ENCODE measurements at regions of chr20 and their contacts with region 1.

Region 1: DNA sequence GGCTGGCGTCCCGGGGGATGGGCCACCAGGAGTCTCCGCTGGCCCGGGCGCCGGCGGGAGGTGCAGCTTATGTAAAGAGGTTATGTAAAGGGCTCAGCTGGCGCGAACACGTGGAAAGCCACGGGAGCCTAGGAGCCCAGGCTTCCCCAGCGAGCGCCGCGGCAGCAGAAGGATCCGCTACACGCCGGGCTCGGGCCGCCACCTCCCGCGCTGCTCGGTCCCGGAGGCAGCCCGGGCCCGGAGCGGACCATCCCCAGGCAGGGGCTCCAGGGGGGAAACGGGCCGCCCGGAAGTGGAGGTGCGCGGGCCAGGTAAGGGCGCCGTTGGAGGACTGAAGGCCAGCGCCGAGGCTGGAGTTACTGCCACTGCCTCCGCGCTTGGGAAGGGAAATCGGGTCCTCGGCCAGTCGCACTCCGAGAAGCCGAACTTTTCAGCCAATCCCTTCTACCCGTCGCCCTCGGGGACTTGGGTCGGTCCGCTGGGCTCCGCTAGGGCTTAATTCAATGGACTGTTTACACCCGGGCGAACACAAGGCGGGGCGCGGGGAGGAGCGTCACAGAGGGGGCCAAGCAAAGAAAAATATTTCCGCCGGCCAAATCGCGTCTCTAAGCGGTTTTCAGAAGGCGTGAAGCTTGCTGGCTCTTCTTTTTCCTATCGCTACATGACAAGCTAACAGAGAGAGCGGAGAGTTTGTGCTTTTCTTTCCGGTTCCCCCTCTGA is 398 bp downstream of the STK35 start:
- DNase-seq: peak; percentile 88
- H3K4me3 ChIP-seq: peak overlapping the region; percentile 83 to 99
- H3K27ac ChIP-seq: peak overlapping the region; percentile 99
- H3K4me1 ChIP-seq: peaks cover 19% of the 10 kb centered on the region
- H3K27me3 ChIP-seq: no peaks in the 10 kb centered on the region
- CTCF ChIP-seq: peak in 2 of 4 experiments; percentile 19 to 39
- POLR2A ChIP-seq: peak; percentile 44

Region 2: GRCh38 chr20:1876975-1877608 is 224.9 kb before region 1 on chr20:
- intact Hi-C with region 1: no loop called
- DNase-seq: no peak
- H3K4me3 ChIP-seq: no peak overlapping the region
- H3K27ac ChIP-seq: no peak overlapping the region
- H3K4me1 ChIP-seq: no peaks in the 10 kb centered on the region
- H3K27me3 ChIP-seq: no peaks in the 10 kb centered on the region
- CTCF ChIP-seq: no peak
- POLR2A ChIP-seq: no peak

Region 3: GRCh38 chr20:1894951-1895673 is 206.9 kb before region 1 on chr20 and contains the start of gene SIRPA:
- intact Hi-C with region 1: loop called (anchors 5 kb)
- DNase-seq: peak; percentile 58
- H3K4me3 ChIP-seq: peak within 1 kb of the TSS; percentile 59 to 63
- H3K27ac ChIP-seq: peak within 1 kb of the TSS; percentile 88 to 92
- H3K4me1 ChIP-seq: no peaks in the 10 kb centered on the region
- H3K27me3 ChIP-seq: no peaks in the 10 kb centered on the region
- CTCF ChIP-seq: no peak
- POLR2A ChIP-seq: peak; percentile 27
- total RNA-seq, gene SIRPA: 20.3 to 31.0 TPM

Region 4: DNA sequence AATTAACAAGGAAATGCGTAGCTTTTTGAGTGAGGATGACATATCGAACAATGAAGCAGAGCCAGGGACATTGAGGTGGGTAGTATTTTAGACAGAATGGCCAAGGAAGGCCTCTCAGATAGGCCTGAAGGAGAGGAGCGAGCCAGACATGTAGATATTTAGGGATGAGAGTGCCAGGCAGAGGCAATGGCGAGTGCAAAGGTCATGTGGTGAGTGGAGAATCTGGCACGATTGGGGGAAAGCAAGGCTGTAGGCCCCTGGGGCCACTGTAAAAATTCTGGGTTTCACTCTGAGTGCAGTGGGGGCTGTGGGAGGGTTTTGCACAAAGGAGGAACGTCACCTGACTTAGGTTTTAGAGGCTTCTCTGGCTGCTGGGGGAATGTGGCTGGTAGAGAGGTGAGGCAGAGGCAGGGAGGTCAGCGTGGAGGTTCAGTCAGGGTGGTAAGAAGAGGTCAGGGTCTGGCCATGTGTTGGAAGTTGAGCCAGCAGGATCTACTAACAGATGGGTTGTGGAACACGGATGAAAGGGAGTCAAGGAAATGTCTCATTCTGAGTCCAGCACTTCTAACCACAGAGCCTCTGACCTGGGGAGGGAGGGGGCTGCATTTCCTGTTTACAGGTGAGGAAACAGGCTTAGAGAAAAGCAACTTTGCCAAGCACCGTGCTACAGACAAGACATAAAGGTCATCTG is 195.5 kb before region 1 on chr20:
- intact Hi-C with region 1: no loop called
- DNase-seq: no peak
- H3K4me3 ChIP-seq: no peak overlapping the region
- H3K27ac ChIP-seq: no peak overlapping the region
- H3K4me1 ChIP-seq: no peaks in the 10 kb centered on the region
- H3K27me3 ChIP-seq: no peaks in the 10 kb centered on the region
- CTCF ChIP-seq: no peak
- POLR2A ChIP-seq: no peak

Region 5: DNA sequence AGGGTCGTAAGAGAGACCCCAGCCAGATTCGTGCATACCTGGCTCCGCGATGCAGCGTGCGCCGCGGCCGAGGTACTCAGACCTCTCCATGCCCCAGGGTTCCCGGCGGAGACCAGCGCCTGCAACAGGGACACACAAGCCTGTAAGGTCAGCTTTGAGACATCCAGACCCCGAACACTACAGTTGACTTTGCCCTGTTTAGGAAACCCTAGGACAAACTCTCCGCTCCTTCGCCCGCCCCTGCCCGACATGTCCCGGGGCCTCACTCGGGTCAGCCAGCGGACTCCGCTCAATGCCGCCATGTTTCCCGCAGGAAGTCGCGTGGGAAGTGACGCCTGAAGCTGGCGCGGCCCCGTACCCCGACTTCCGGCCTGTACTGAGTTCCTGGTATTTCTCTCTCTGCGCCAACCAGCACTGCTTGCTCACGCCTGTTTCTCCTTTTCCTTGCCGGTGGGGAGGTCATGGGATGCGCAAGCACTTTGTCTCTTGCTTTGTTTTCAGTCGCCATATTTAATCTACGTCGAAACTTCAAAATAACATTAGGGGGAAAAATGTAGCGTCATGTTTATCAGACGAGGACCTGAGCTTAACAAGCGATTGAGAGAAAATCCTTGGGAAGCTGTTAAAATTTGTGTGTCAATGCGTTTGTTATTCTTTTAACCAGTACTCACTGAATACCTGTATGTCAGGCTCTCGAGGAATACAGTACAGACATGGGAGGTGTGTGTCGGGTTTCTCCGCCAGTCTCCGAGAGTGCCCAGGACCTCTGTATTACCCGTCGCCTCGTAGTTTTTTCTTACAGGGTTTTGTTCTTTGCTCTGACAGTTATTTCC is 562.1 kb after region 1 on chr20 and contains the start of gene IDH3B:
- intact Hi-C with region 1: loop called (anchors 10 kb)
- DNase-seq: peak; percentile 92
- H3K4me3 ChIP-seq: peak within 1 kb of the TSS; percentile 74 to 95
- H3K27ac ChIP-seq: peak within 1 kb of the TSS; percentile 88 to 90
- H3K4me1 ChIP-seq: peaks cover 3% of the 10 kb centered on the region
- H3K27me3 ChIP-seq: no peaks in the 10 kb centered on the region
- CTCF ChIP-seq: peak in 1 of 4 experiments; percentile 12
- POLR2A ChIP-seq: peak; percentile 77
- total RNA-seq, gene IDH3B: 132 to 141 TPM

Measured in prostate gland (tissue), 2 donors.